Activated B cell treated with CpG ODN at 0.5 μM for 24 hours (primary cell): ENCODE measurements at regions of chr3 and their contacts with region 1.

Region 1: GRCh38 chr3:12175844-12176453 is 17.2 kb upstream of the TIMP4 start:
- DNase-seq: no peak
- ATAC-seq: no peak
- H3K4me3 Mint-ChIP-seq: no peak overlapping the region
- H3K27ac Mint-ChIP-seq: no peak overlapping the region
- H3K4me1 Mint-ChIP-seq: no peaks in the 10 kb centered on the region
- H3K27me3 Mint-ChIP-seq: no peaks in the 10 kb centered on the region
- CTCF ChIP-seq: no peak

Region 2: GRCh38 chr3:12135029-12135657 is 40.8 kb before region 1 on chr3:
- CTCF ChIA-PET with region 1: interaction called, 8 read pairs
- POLR2A ChIA-PET with region 1: no interaction called
- intact Hi-C with region 1: loop called (anchors 2 kb)
- DNase-seq: peak; percentile 34
- ATAC-seq: peak; percentile 77
- H3K4me3 Mint-ChIP-seq: no peak overlapping the region
- H3K27ac Mint-ChIP-seq: no peak overlapping the region
- H3K4me1 Mint-ChIP-seq: no peaks in the 10 kb centered on the region
- H3K27me3 Mint-ChIP-seq: peaks cover 17% of the 10 kb centered on the region
- CTCF ChIP-seq: peak; percentile 33

Region 3: DNA sequence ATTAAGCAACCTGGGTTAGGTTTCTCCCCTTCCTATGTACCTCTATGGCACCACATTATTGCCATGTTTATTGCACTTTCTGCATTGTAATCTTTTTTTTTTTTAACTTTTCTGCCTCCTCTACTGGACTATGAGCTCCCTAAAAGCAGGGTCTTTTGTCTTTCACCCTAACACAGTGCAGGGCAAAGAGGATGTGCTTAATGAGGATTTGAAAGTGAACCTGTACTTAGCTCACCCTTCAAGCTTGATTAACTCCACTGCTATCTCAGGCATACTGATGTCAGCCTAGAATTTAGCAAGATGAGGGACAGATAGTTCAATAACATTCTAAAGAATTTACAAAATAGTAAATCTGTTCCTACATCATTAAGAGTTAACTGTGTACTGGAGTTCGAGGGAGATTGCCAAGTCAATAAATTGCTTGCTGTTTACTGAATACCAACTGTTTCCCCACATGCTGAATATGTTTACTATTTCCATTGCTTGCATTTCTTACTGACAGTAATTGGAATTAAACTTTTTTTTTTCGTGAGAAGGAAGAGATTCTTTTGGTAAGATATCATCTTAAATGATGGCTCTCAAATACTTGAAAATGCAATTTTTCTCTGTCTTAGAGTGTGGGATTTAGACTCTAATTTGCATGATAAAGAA is 97.2 kb after region 1 on chr3:
- CTCF ChIA-PET with region 1: no interaction called
- POLR2A ChIA-PET with region 1: no interaction called
- intact Hi-C with region 1: no loop called
- DNase-seq: no peak
- ATAC-seq: peak; percentile 71
- H3K4me3 Mint-ChIP-seq: no peak overlapping the region
- H3K27ac Mint-ChIP-seq: no peak overlapping the region
- H3K4me1 Mint-ChIP-seq: peaks cover 7% of the 10 kb centered on the region
- H3K27me3 Mint-ChIP-seq: peaks cover 6% of the 10 kb centered on the region
- CTCF ChIP-seq: no peak